ENCODE measurements at regions of chr12 and their contacts with region 1.

Region 1: DNA sequence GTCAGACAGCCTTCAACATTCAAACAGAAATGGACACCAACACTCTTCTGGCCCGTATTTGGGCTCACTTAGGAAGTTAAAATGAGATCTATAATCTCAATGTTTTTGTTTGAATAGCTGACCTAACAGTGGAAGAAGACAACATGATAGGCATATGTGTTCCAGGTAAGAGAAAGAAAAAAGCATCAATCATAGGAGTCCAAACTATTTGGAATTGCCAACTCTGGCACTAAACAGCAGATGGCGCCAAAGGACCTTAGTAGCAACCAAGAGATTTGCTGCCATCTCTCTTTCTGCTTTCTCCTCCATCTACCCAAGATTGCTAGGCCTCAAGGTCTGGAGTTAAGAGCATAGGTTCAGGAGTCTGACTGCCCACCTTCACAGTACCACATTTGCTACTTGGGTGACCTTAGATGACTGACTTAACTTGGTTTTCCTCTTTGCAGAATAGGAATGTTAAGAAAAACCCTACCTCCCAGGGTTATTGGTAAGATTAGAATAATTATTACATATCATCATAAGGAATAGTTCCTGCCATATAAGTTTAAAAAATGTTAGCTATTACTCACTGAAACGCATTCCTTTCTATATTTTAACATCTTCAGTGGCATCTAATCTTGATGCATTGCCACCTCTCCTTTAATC is 30.2 kb downstream of the PEX5 start:
- DNase-seq: peak; percentile 32 to 86 (median 67)
- ATAC-seq: peak; percentile 54 to 63 (median 56)
- H3K4me3 ChIP-seq: no peak overlapping the region
- H3K4me3 Mint-ChIP-seq: no peak overlapping the region
- H3K27ac ChIP-seq: no peak overlapping the region
- H3K27ac Mint-ChIP-seq: no peak overlapping the region
- H3K4me1 ChIP-seq: no peaks in the 10 kb centered on the region
- H3K4me1 Mint-ChIP-seq: no peaks in the 10 kb centered on the region
- H3K27me3 ChIP-seq: peaks cover 0 to 3% of the 10 kb centered on the region in 2 experiments
- H3K27me3 Mint-ChIP-seq: no peaks in the 10 kb centered on the region

Region 2: GRCh38 chr12:6827982-6828780 is 391.5 kb before region 1 on chr12 and contains the start of gene P3H3:
- CTCF ChIA-PET with region 1: no interaction called
- POLR2A ChIA-PET with region 1: no interaction called
- DNase-seq: peak in 3 of 35 experiments; percentile 15 to 59 (median 23)
- ATAC-seq: peak; percentile 58 to 64 (median 62)
- H3K4me3 ChIP-seq: peak within 1 kb of the TSS; percentile 75 to 81
- H3K4me3 Mint-ChIP-seq: peak within 1 kb of the TSS; percentile 85 to 93 (median 86)
- H3K27ac ChIP-seq: peak within 1 kb of the TSS; percentile 49
- H3K27ac Mint-ChIP-seq: peak within 1 kb of the TSS; percentile 79 to 86
- H3K4me1 ChIP-seq: peaks cover 0 to 31% of the 10 kb centered on the region in 2 experiments
- H3K4me1 Mint-ChIP-seq: peaks cover 17 to 30% (median 22%) of the 10 kb centered on the region in 3 donors
- H3K27me3 ChIP-seq: peaks cover 0 to 80% of the 10 kb centered on the region in 2 experiments
- H3K27me3 Mint-ChIP-seq: peaks cover 12 to 60% of the 10 kb centered on the region in 2 donors
- total RNA-seq, gene P3H3: 4.7 to 9.8 (median 8.0) TPM

Region 3: DNA sequence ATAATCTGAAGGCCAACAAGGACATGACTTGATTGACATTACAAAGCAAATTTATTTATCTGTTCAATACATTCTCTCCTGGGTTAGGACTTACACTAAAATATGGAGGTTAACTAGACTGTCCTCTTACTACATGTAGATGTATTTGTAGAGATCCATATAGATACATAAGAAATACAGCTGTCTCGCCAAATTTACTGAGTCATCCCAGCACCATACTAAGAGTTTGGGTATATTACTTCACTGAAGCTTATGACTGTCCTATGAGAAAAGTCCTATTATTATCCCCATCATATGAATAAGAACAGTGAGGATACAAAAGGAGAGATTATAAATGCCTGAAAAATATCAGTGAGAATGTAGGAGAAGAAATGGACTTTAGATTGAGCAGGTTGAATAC is 39.3 kb after region 1 on chr12:
- CTCF ChIA-PET with region 1: no interaction called
- POLR2A ChIA-PET with region 1: no interaction called
- DNase-seq: no peak
- ATAC-seq: no peak
- H3K4me3 ChIP-seq: no peak overlapping the region
- H3K4me3 Mint-ChIP-seq: no peak overlapping the region
- H3K27ac ChIP-seq: no peak overlapping the region
- H3K27ac Mint-ChIP-seq: no peak overlapping the region
- H3K4me1 ChIP-seq: no peaks in the 10 kb centered on the region
- H3K4me1 Mint-ChIP-seq: no peaks in the 10 kb centered on the region
- H3K27me3 ChIP-seq: no peaks in the 10 kb centered on the region
- H3K27me3 Mint-ChIP-seq: peaks cover 7 to 11% of the 10 kb centered on the region in 2 donors

Region 4: DNA sequence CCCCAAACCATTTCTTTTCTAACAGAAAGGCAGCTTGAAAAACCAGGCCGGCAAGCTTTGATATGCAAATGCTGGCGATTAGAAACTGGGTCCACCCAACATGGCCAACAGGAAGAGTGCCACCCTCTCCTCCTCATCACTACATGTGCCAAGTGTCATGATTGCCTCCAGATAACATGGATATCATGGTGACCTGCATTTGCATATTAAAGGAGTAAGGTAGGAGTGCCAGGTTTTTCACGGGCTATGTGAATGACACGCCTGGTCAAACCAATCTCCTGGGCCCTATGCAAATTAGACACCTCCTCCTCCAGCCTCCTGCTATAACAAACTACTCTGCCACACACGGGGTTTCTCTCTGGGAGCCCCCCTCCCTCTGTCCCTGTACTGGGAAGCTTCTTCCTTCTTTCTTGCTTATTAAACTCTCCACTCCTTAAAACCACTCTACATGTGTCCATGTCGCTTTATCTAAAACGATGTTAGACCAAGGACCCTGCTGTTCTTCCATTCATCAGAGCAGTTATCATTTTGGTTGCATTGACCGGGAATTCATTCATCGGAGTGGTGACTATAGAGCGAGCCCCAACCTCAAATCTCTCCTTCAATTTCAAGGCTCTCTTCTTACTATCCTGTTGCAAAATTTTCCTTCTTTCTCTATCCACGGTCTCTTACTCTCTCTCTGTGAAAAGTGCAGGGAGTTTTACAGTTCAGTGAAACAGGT is 418.5 kb after region 1 on chr12:
- CTCF ChIA-PET with region 1: interaction called, 7 to 10 read pairs
- POLR2A ChIA-PET with region 1: no interaction called
- DNase-seq: no peak
- ATAC-seq: peak in 1 of 4 experiments; percentile 4
- H3K4me3 ChIP-seq: no peak overlapping the region
- H3K4me3 Mint-ChIP-seq: peak overlapping the region; percentile 60 to 78 (median 70)
- H3K27ac ChIP-seq: no peak overlapping the region
- H3K27ac Mint-ChIP-seq: peak overlapping the region in 1 of 2 donors; percentile 91
- H3K4me1 ChIP-seq: peaks cover 8 to 28% of the 10 kb centered on the region in 2 experiments
- H3K4me1 Mint-ChIP-seq: peaks cover 33 to 44% (median 37%) of the 10 kb centered on the region in 3 donors
- H3K27me3 ChIP-seq: peaks cover 0 to 4% of the 10 kb centered on the region in 2 experiments
- H3K27me3 Mint-ChIP-seq: peaks cover 3 to 8% of the 10 kb centered on the region in 2 donors

Measured in T-cell (primary cell).